Motor neuron (in vitro differentiated cells): ENCODE measurements at regions of chr1 and their contacts with region 1.

Region 1: DNA sequence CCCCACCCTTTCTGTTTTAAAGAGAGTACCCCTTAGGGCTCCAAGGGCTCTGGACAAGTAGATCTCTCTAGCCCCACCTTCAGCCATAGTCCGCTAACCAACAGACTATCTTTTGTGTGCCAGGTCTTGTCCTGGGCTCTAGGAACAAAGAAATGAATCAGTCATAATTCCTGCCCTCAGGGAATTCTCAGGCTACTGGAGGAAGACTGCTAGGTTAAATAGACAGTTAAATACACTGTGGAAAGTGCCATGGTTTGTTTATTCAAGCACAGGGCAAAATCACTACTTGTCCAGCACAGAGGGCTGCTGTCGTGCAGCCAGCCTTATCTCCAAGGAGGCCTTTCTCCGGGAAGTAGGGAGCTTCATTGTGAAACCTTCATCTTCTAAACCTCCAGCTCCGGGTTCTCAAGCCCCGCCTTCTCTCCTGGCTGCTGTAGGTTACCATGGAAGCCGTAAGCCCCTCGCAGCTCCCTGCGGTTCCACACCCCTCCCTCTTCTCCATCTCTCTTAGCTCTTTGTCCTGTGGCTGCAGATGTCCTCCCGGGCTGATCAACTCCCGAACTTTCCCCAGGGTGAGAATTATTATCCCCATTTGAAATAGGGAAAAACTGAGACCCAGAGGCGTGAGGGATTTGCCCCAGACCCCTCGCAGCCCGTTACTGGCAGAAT is 29.8 kb downstream of the SHISAL2A start:
- ATAC-seq: peak in 7 of 8 experiments; percentile 39 to 90 (median 57)
- H3K4me3 ChIP-seq: peak overlapping the region in 2 of 5 donors; percentile 5 to 11
- H3K27ac ChIP-seq: peak overlapping the region; percentile 70 to 97
- H3K4me1 ChIP-seq: peaks cover 62 to 68% of the 10 kb centered on the region in 2 donors

Region 2: GRCh38 chr1:52426371-52426770 is 236.4 kb before region 1 on chr1:
- in situ Hi-C with region 1: loop called in 1 of 9 experiments (anchors 25 kb)
- ATAC-seq: no peak
- H3K4me3 ChIP-seq: no peak overlapping the region
- H3K27ac ChIP-seq: no peak overlapping the region
- H3K4me1 ChIP-seq: no peaks in the 10 kb centered on the region

Region 3: GRCh38 chr1:52542085-52542688 is 120.6 kb before region 1 on chr1:
- in situ Hi-C with region 1: loop called in 1 of 9 experiments (anchors 25 kb)
- ATAC-seq: no peak
- H3K4me3 ChIP-seq: no peak overlapping the region
- H3K27ac ChIP-seq: no peak overlapping the region
- H3K4me1 ChIP-seq: no peaks in the 10 kb centered on the region

Region 4: DNA sequence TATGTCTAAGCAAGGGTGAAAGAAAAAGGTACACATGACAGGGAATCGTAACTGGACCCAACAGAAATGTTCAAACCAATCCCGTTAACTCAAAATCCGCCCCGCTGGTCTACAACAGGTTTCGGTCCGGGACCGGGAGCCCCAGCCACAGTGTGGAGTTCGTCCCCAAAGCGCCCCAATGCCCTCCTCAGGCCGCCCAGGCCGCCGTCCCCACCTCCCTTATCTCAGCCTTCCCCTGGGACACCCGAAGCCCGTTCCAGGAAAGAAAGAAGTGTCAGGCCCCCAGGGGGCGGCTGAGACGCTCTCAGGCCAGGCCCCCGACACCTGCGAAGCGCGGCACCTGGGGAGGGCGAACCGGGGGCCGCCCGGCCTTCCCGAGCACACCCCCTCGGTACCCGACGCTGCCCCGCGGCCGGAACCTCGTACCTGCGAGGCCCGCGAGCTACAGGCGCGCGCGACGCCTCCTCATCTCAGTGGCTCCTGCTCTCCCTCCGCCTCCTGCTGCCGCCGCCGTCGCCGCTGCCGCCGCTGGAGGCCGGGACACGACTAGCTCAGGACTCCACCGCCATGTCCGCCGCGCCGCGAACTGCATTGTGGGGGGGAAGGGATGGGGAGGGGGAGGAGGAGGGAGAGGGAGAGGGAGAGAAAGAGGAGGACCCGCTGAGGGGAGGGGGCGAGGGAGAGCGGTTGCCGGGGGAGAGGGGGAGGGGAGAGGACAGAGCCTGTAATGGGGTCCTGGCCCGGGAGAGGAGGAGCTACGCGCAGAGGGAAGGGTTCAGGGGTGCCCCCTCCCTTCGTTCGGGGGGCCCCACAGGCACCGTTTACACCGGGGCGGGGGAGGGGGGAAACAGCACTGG is 110.0 kb before region 1 on chr1 and contains the start of gene TUT4:
- in situ Hi-C with region 1: loop called in 4 of 9 experiments (anchors 25 kb)
- ATAC-seq: peak; percentile 63 to 82 (median 77)
- H3K4me3 ChIP-seq: peak within 1 kb of the TSS; percentile 84 to 97 (median 95)
- H3K27ac ChIP-seq: peak within 1 kb of the TSS; percentile 96 to 98
- H3K4me1 ChIP-seq: peaks cover 11 to 22% of the 10 kb centered on the region in 2 donors
- total RNA-seq, gene TUT4: 36.0 to 143 (median 94.1) TPM